Right ventricle myocardium inferior (tissue), 1 donor: ENCODE measurements at regions of chr16 and their contacts with region 1.

Region 1: GRCh38 chr16:74862741-74863244 is 88.2 kb upstream of the FA2H start:
- DNase-seq: no peak
- ATAC-seq: no peak

Region 2: DNA sequence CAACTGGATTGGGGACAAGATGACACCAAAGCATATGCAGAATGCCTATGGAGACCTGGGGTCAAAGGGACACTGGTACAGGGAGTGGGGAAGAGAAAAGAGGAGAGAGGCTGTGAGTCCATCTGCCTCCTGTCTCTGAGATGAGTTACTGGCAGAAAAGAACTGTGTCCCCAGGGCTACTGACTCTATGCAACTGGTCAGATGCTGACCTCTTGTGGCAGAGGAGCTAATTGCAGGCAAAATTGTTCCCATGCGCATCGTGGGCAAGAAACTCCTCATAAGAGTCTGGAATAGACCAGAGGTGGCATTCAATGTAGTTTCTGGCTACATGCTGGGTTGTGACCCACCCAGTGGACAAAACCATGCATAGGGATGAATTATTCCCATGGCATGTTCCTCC is 136.1 kb before region 1 on chr16:
- intact Hi-C with region 1: no loop called
- DNase-seq: no peak
- ATAC-seq: no peak

Region 3: DNA sequence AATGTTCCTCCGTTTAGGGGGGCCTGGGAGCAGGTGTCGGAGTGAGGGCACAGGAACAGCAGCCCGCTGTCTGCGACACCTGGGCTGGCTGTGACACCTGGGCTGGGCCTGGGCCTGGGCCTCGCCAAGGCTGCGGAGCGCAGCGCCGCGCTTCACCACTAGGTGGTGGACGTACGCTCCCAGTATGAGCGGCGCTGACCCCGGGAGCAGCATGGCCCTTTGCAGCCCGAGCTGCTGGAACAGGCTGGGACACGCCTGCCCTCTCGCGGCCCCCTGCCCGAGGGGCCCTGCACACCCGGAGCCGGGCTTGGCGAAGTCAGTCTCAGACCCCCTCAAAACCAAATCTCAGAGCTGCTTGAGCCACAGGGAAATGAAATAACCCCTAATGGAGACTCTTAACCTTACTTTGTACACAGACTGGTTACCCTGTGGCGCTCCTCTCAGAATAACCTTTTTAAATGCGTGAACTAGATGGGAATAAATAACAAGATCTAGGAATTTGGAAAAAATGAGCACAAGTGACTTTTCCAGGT is 49.6 kb before region 1 on chr16:
- intact Hi-C with region 1: loop called (anchors 2 kb)
- DNase-seq: peak; percentile 81
- ATAC-seq: peak; percentile 92

Region 4: DNA sequence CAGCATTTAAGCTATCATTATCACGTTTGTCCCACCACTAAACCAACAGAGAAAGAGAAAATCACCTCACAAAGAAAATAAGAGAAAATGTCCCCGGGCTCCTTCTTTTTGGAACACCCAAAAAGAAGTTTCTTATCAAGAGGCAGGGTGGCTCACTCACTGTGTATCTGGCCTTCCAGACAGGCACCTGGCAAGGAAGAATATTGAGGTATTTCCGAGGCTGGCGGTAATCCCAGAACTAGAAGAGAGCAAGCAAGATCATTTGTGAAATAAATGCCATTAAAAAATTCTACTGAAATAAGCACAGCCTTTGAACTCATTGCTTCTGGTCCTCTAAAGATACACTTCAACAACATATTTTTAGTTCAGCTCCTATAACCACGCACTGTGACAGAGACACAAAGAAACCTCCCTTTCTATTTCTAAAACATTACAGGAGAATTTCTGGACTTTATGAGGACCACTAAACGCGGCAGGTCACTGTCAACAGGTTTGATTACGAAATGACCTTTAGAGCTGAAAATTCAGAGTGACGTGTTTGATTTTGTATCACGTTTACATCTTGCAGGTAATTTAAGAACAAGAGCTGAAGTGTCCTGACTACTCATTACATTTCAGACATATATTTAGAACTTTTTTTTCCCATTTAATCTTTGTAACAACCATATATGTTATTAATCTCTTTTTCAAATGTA is 61.1 kb after region 1 on chr16:
- intact Hi-C with region 1: no loop called
- DNase-seq: no peak
- ATAC-seq: no peak